CD4-positive, alpha-beta memory T cell (primary cell): ENCODE measurements at regions of chr6 and their contacts with region 1.

Region 1: DNA sequence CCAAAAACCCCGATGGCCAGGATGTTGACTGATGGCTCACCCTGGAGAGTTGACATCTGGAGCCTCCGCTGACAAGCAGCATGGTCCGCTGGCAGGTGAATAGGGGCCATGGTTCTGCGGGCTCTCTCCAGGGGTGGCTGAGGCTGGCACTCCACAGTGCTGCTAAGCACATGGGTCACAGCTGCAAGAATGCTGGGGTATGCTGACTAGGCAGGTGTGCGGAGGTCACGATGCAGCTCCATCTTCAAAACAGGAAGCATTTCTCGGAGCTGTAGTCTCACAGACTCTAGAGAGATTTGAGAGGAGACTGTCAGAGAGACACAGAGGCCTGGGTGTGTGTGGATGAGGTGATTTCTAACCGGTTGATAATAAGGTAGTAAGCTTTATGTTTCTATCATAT is 341.6 kb downstream of the NRN1 start:
- DNase-seq: peak in 3 of 5 donors; percentile 7 to 32 (median 17)
- H3K4me3 ChIP-seq: no peak overlapping the region
- H3K4me3 Mint-ChIP-seq: peak overlapping the region in 7 of 8 donors; percentile 14 to 68 (median 43)
- H3K27ac ChIP-seq: no peak overlapping the region
- H3K27ac Mint-ChIP-seq: peak overlapping the region; percentile 33 to 92 (median 77)
- H3K4me1 ChIP-seq: peaks cover 48% of the 10 kb centered on the region
- H3K4me1 Mint-ChIP-seq: peaks cover 24 to 65% (median 47%) of the 10 kb centered on the region in 4 donors
- H3K27me3 ChIP-seq: no peaks in the 10 kb centered on the region
- H3K27me3 Mint-ChIP-seq: no peaks in the 10 kb centered on the region

Region 2: DNA sequence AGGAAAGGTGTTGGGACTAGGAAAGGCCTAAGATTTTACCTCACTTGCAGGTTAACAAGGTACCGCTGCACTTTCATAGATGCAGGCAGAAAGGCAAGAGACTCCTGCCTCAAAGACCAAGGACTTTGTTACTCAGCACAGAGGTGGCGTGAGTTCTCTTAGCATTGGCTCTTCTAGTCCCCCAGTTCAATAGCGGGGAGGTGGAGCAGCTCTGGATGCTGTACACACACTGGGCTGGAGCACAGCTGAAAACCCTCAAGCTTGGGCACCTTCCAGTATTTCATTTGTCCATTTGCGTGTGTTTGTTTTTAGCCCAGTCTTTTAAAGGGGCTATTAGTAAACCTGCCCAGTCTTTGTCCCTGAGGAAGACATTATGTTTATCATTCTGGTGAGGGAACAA is 58.6 kb before region 1 on chr6:
- CTCF ChIA-PET with region 1: no interaction called
- POLR2A ChIA-PET with region 1: no interaction called
- intact Hi-C with region 1: no loop called
- DNase-seq: no peak
- H3K4me3 ChIP-seq: no peak overlapping the region
- H3K4me3 Mint-ChIP-seq: no peak overlapping the region
- H3K27ac ChIP-seq: no peak overlapping the region
- H3K27ac Mint-ChIP-seq: peak overlapping the region in 2 of 7 donors; percentile 19 to 24
- H3K4me1 ChIP-seq: no peaks in the 10 kb centered on the region
- H3K4me1 Mint-ChIP-seq: peaks cover 0 to 11% (median under 1%) of the 10 kb centered on the region in 4 donors
- H3K27me3 ChIP-seq: no peaks in the 10 kb centered on the region
- H3K27me3 Mint-ChIP-seq: no peaks in the 10 kb centered on the region

Region 3: GRCh38 chr6:5626727-5627426 is 38.3 kb before region 1 on chr6:
- CTCF ChIA-PET with region 1: no interaction called
- POLR2A ChIA-PET with region 1: no interaction called
- intact Hi-C with region 1: loop called (anchors 5 kb)
- DNase-seq: peak in 2 of 5 donors; percentile 6 to 24
- H3K4me3 ChIP-seq: no peak overlapping the region
- H3K4me3 Mint-ChIP-seq: peak overlapping the region; percentile 46 to 85 (median 58)
- H3K27ac ChIP-seq: peak overlapping the region; percentile 27
- H3K27ac Mint-ChIP-seq: peak overlapping the region; percentile 33 to 91 (median 83)
- H3K4me1 ChIP-seq: peaks cover 18% of the 10 kb centered on the region
- H3K4me1 Mint-ChIP-seq: peaks cover 25 to 45% (median 33%) of the 10 kb centered on the region in 4 donors
- H3K27me3 ChIP-seq: no peaks in the 10 kb centered on the region
- H3K27me3 Mint-ChIP-seq: no peaks in the 10 kb centered on the region